ENCODE measurements at regions of chr18 and their contacts with region 1.

Region 1: DNA sequence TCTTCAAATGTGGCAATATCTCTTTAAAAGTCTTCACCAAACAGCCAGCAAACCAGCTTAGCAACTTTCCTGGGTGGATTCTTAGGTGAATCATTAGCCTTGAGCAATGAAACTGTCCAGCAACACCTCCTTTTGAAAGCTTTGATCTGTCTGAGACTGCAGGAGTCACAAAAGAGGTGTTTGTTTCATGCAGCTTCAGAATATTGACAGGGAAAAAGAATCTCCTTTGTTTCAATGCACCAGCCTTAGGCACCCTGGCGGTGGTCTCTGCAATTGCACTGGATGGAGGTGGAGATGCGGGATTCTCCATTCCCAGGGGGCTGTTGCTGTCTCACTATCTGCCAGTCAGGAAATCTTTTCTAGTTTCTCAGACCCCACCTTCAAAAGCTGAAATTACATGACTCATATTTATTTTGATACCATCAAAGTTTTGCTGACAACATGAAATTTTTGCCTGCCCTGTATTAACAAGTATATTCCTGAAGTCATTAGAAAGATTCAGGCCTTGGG is 76.0 kb upstream of the DSG1 start:
- DNase-seq: peak; percentile 99
- H3K4me3 ChIP-seq: peak overlapping the region in 1 of 3 experiments; percentile 22
- H3K27ac ChIP-seq: peak overlapping the region; percentile 94
- H3K4me1 ChIP-seq: peaks cover 56% of the 10 kb centered on the region
- H3K27me3 ChIP-seq: no peaks in the 10 kb centered on the region
- CTCF ChIP-seq: peak; percentile 84 to 85

Region 2: DNA sequence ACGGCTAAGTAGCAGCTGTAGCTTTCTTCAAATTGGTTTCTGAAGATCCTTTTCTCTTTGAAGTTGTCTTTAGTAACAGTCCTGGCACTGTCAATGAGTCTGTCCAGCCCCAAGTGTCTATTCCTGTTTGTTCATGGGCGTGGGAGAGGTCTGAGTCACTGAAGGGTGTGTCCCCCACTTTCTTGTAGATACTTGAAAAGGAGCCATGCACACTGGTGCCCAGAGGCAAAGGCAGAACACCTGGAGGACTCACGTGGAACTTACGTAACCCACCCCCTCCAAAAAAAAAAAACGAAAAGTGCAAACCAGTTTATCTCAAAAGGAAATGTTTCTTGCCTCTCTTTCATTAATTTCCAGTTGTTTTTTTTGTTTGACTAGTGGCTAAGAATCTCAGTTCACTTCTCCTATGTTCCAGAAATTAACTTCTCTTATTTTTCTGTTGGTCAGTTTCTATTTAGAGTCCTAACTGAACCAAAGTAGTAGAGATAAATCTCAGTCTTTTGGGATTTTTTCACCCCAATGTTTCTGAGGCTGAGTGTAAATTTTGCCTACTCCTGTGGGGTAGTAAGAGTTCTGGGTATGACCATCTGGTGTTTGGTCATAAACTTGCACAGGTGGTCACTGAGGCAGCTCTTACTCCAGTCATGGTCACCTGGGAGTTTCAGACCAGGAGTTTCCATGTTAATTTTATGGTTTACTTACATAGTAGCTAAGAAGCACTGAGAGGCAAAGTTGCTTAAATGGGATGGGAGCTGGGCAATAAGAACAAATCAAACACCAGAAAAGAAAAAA is 254.3 kb before region 1 on chr18:
- CTCF ChIA-PET with region 1: no interaction called
- dilution Hi-C with region 1: no loop called
- in situ Hi-C with region 1: no loop called
- intact Hi-C with region 1: loop called (anchors 5 kb)
- DNase-seq: peak; percentile 99
- H3K4me3 ChIP-seq: no peak overlapping the region
- H3K27ac ChIP-seq: peak overlapping the region; percentile 97
- H3K4me1 ChIP-seq: peaks cover 22% of the 10 kb centered on the region
- H3K27me3 ChIP-seq: no peaks in the 10 kb centered on the region
- CTCF ChIP-seq: no peak

Region 3: DNA sequence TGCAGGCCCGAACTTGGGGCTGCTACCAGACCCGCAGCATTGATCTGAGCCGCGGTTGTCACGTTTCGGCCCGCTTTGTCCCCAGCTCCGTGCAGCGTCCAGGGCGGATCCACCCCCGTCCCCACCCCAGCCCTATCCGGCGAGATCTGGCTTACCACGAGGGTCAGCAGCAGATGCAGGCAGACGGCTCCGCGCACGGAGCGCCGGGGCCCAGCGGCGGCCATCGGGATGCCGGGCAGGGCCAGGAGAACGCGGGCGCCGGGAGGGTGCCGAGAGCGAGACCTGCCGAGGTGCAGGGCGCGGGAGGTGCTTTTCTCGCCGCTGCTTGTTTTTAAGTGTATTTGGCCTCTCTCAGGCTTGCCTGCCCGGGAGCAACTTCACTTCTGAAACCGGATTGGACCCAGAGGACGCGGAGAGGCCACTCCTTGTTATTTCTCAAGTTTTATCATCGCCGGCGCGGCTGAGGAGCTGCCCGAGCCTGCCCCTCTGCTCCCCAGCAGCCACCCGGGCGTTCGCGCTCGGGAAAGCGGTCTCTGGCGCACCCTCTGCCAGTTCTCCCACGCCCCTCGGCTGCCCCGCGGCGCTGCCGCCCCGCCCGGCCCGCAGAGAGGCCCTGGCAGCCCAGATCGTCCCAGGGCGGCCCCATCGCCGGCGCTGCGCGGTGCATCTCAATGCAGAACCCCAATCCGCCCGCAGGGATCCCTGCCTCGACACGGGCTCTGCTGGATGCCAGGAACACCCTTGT is 199.3 kb before region 1 on chr18 and contains the start of gene DSC3:
- CTCF ChIA-PET with region 1: no interaction called
- dilution Hi-C with region 1: loop called (anchors 25 kb)
- in situ Hi-C with region 1: loop called in 1 of 2 experiments (anchors 25 kb)
- intact Hi-C with region 1: loop called (anchors 1 kb)
- DNase-seq: peak; percentile 97
- H3K4me3 ChIP-seq: peak within 1 kb of the TSS; percentile 55 to 86 (median 61)
- H3K27ac ChIP-seq: peak within 1 kb of the TSS; percentile 88
- H3K4me1 ChIP-seq: peaks cover 41% of the 10 kb centered on the region
- H3K27me3 ChIP-seq: no peaks in the 10 kb centered on the region
- CTCF ChIP-seq: peak in 1 of 2 donors; percentile 18
- total RNA-seq, gene DSC3: 125 to 272 TPM

Region 4: DNA sequence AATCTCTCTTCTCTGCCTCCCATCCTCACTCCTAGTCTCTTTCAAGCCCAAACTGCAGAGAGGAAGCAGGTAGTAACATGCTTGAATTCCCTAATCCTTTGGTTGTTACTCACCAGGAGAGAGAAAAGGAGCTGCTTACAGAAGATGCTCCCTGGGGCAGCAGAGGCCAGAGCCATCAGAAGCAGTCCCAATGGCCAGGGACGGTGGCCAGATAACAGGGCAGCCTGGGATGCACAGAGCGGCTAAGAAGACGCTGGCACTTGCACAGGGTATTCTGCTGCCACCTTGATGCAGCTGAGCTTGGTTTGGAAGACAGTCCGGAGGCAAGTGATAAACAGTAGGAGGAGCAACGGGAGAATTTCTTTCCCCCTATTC is 79.5 kb before region 1 on chr18:
- CTCF ChIA-PET with region 1: interaction called, 3 read pairs
- dilution Hi-C with region 1: no loop called
- in situ Hi-C with region 1: no loop called
- intact Hi-C with region 1: loop called (anchors 1 kb)
- DNase-seq: peak; percentile 79
- H3K4me3 ChIP-seq: peak overlapping the region in 1 of 3 experiments; percentile 5
- H3K27ac ChIP-seq: peak overlapping the region; percentile 46
- H3K4me1 ChIP-seq: peaks cover 20% of the 10 kb centered on the region
- H3K27me3 ChIP-seq: no peaks in the 10 kb centered on the region
- CTCF ChIP-seq: no peak

Region 5: GRCh38 chr18:31230495-31230894 is 11.5 kb before region 1 on chr18:
- CTCF ChIA-PET with region 1: no interaction called
- dilution Hi-C with region 1: no loop called
- in situ Hi-C with region 1: no loop called
- intact Hi-C with region 1: loop called (anchors 1 kb)
- DNase-seq: peak; percentile 96
- H3K4me3 ChIP-seq: no peak overlapping the region
- H3K27ac ChIP-seq: peak overlapping the region; percentile 95
- H3K4me1 ChIP-seq: peaks cover 30% of the 10 kb centered on the region
- H3K27me3 ChIP-seq: no peaks in the 10 kb centered on the region
- CTCF ChIP-seq: no peak

Region 6: DNA sequence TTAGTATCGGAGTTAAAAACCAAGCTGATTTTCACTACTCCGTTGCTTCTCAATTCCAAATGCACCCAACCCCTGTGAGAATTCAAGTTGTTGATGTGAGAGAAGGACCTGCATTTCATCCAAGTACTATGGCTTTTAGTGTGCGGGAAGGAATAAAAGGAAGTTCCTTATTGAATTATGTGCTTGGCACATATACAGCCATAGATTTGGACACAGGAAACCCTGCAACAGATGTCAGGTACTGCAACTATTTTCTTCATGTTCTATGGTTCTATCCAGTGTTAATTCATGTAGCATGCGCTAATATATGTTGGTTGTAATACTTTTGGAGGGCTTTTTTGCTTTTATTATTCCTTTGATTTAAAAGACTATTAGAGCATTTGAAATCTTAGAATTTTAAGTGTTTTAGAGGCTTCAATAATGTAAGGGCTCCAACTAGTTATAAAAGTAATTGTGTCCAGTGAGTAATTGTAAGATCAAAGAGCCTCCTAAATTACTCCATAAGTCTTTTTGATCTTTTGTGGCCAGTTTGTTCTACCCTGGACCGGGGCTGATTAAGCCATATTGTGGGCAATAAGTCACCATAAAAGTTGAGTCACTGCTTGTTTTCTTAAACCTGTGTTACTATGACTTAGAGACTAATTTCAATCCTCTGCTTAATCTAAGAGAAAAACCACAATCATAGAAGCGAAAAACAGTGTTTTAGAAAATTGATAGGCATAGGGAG is 157.5 kb after region 1 on chr18:
- CTCF ChIA-PET with region 1: no interaction called
- dilution Hi-C with region 1: no loop called
- in situ Hi-C with region 1: no loop called
- intact Hi-C with region 1: no loop called
- DNase-seq: peak; percentile 88
- H3K4me3 ChIP-seq: no peak overlapping the region
- H3K27ac ChIP-seq: no peak overlapping the region
- H3K4me1 ChIP-seq: peaks cover 4% of the 10 kb centered on the region
- H3K27me3 ChIP-seq: peaks cover 4% of the 10 kb centered on the region
- CTCF ChIP-seq: no peak

Measured in mammary epithelial cell (primary cell).